CD14-positive monocyte (primary cell): ENCODE measurements at regions of chr1 and their contacts with region 1.

Region 1: GRCh38 chr1:93846211-93846991 is 32.6 kb downstream of the DNTTIP2 start:
- DNase-seq: peak; percentile 62 to 82 (median 72)
- H3K4me3 ChIP-seq: peak overlapping the region; percentile 72 to 86 (median 73)
- H3K4me3 Mint-ChIP-seq: peak overlapping the region; percentile 94
- H3K27ac ChIP-seq: peak overlapping the region; percentile 85 to 86
- H3K27ac Mint-ChIP-seq: peak overlapping the region; percentile 87 to 92 (median 90)
- H3K4me1 ChIP-seq: peaks cover 16 to 35% of the 10 kb centered on the region in 2 donors
- H3K4me1 Mint-ChIP-seq: peaks cover 23% of the 10 kb centered on the region
- H3K27me3 ChIP-seq: no peaks in the 10 kb centered on the region
- H3K27me3 Mint-ChIP-seq: peaks cover 0 to 4% (median 2%) of the 10 kb centered on the region in 3 donors
- CTCF ChIP-seq: no peak

Region 2: GRCh38 chr1:93345633-93346420 is 500.6 kb before region 1 on chr1 and contains the start of gene DR1:
- intact Hi-C with region 1: loop called (anchors 10 kb)
- DNase-seq: peak; percentile 82 to 87 (median 86)
- H3K4me3 ChIP-seq: peak within 1 kb of the TSS; percentile 80 to 99 (median 97)
- H3K4me3 Mint-ChIP-seq: peak within 1 kb of the TSS; percentile 99 to 100
- H3K27ac ChIP-seq: peak within 1 kb of the TSS; percentile 95 to 98
- H3K27ac Mint-ChIP-seq: peak within 1 kb of the TSS; percentile 96 to 99 (median 98)
- H3K4me1 ChIP-seq: peaks cover 20 to 43% of the 10 kb centered on the region in 2 donors
- H3K4me1 Mint-ChIP-seq: peaks cover 41% of the 10 kb centered on the region
- H3K27me3 ChIP-seq: no peaks in the 10 kb centered on the region
- H3K27me3 Mint-ChIP-seq: no peaks in the 10 kb centered on the region
- CTCF ChIP-seq: no peak
- polyA plus RNA-seq, gene DR1: 13.5 to 61.8 (median 61.0) TPM

Region 3: GRCh38 chr1:93629099-93630059 is 217.0 kb before region 1 on chr1:
- intact Hi-C with region 1: loop called (anchors 2 to 10 kb)
- DNase-seq: peak; percentile 42 to 66 (median 61)
- H3K4me3 ChIP-seq: no peak overlapping the region
- H3K4me3 Mint-ChIP-seq: no peak overlapping the region
- H3K27ac ChIP-seq: no peak overlapping the region
- H3K27ac Mint-ChIP-seq: no peak overlapping the region
- H3K4me1 ChIP-seq: no peaks in the 10 kb centered on the region
- H3K4me1 Mint-ChIP-seq: no peaks in the 10 kb centered on the region
- H3K27me3 ChIP-seq: no peaks in the 10 kb centered on the region
- H3K27me3 Mint-ChIP-seq: peaks cover 0 to under 1% (median 0%) of the 10 kb centered on the region in 3 donors
- CTCF ChIP-seq: peak; percentile 84

Region 4: GRCh38 chr1:93779540-93780192 is 66.7 kb before region 1 on chr1:
- intact Hi-C with region 1: no loop called
- DNase-seq: no peak
- H3K4me3 ChIP-seq: no peak overlapping the region
- H3K4me3 Mint-ChIP-seq: no peak overlapping the region
- H3K27ac ChIP-seq: no peak overlapping the region
- H3K27ac Mint-ChIP-seq: no peak overlapping the region
- H3K4me1 ChIP-seq: no peaks in the 10 kb centered on the region
- H3K4me1 Mint-ChIP-seq: no peaks in the 10 kb centered on the region
- H3K27me3 ChIP-seq: no peaks in the 10 kb centered on the region
- H3K27me3 Mint-ChIP-seq: peaks cover 3 to 7% (median 6%) of the 10 kb centered on the region in 3 donors
- CTCF ChIP-seq: no peak

Region 5: DNA sequence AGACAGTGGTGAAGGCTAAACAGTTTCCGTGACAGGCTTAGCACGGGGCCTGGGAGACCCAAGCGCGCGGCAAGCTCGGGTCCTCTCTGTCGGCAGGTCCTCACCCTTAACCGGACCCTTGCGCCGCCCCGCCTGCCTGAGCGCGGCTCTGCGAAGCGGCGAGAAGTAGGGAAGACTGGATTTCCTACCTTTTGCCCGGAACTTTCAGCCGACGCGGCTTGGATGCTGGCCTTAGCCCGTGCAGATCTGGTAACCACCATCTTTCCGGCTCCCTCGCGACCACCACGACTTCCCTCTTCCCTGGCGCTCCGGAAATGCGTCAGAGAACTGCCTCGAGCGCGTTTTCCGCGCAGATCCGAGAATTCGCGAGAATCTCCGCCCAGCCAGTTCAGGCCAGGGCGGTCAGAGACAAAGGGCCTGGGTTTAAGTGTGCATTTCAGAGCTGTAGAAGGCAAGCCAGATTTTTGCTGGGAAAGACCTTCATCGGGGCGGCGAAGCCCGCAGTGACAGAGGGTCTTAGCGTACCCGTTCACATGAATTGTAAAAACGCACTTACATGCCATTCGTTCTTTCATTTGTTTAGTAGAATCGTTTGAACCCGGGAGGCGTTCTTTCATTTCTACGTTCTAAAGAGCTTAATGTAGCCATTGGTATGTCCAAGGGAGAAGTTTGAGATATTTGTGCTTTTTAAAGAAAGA is 32.6 kb after region 1 on chr1 and contains the start of gene DNTTIP2:
- intact Hi-C with region 1: loop called in 1 of 2 experiments (anchors 2 kb)
- DNase-seq: peak; percentile 85 to 90 (median 89)
- H3K4me3 ChIP-seq: peak within 1 kb of the TSS; percentile 83 to 98 (median 91)
- H3K4me3 Mint-ChIP-seq: peak within 1 kb of the TSS; percentile 91 to 95
- H3K27ac ChIP-seq: peak within 1 kb of the TSS; percentile 98 to 100
- H3K27ac Mint-ChIP-seq: peak within 1 kb of the TSS; percentile 97 to 98 (median 98)
- H3K4me1 ChIP-seq: peaks cover 25 to 34% of the 10 kb centered on the region in 2 donors
- H3K4me1 Mint-ChIP-seq: peaks cover 29% of the 10 kb centered on the region
- H3K27me3 ChIP-seq: no peaks in the 10 kb centered on the region
- H3K27me3 Mint-ChIP-seq: peaks cover 0 to 4% (median 0%) of the 10 kb centered on the region in 3 donors
- CTCF ChIP-seq: no peak
- polyA plus RNA-seq, gene DNTTIP2: 21.1 to 68.8 (median 42.1) TPM

Region 6: GRCh38 chr1:93944656-93945055 is 98.3 kb after region 1 on chr1:
- intact Hi-C with region 1: no loop called
- DNase-seq: no peak
- H3K4me3 ChIP-seq: no peak overlapping the region
- H3K4me3 Mint-ChIP-seq: no peak overlapping the region
- H3K27ac ChIP-seq: no peak overlapping the region
- H3K27ac Mint-ChIP-seq: no peak overlapping the region
- H3K4me1 ChIP-seq: no peaks in the 10 kb centered on the region
- H3K4me1 Mint-ChIP-seq: peaks cover 4% of the 10 kb centered on the region
- H3K27me3 ChIP-seq: no peaks in the 10 kb centered on the region
- H3K27me3 Mint-ChIP-seq: peaks cover 0 to 9% (median 5%) of the 10 kb centered on the region in 3 donors
- CTCF ChIP-seq: no peak